CD8-positive, alpha-beta T cell (primary cell): ENCODE measurements at regions of chr7 and their contacts with region 1.

Region 1: DNA sequence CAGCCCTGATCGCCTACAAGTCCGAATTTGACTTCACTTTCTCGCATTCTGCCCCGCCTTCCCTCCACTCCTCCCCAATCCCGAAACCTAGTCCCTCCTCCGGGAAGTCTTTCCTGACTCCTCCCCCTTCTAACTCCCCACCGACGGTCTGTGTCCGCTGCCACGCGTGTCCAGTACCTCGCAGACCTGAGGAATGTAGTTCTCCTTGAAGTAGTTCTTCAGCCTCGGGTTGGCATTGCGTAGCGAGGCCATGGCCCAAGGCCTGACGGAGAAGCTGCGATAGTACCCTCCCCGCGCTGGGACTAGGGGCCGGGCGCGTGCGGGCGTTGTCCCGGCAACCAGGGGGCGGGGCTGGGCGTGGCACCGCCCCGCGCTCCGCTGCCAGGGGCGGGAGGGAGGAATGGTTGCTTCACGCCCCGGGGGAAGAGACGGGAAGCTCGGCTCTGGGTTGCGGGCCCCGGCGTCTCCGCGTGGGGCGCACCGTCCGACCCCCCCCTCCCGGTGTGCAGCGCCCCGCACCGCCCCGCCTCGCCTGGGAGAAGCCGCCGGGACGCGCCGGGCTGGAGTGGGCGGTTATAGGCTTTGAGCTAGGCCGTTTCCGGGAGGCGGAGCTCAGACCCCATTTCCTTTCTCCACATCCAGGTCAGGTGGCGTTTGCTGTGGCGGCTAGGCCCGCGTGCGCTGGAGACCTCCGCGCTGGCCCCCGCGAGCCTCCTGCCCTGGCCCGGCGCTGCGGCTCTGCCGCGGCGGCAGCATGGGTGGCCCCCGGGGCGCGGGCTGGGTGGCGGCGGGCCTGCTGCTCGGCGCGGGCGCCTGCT is at the starts of genes ARMC10 and FBXL13:
- DNase-seq: peak; percentile 79 to 95 (median 87)
- ATAC-seq: peak; percentile 78
- H3K4me3 ChIP-seq: peak within 1 kb of the TSS; percentile 81 to 99
- H3K4me3 Mint-ChIP-seq: peak within 1 kb of the TSS; percentile 98
- H3K27ac ChIP-seq: peak within 1 kb of the TSS; percentile 77 to 81
- H3K27ac Mint-ChIP-seq: peak within 1 kb of the TSS; percentile 96
- H3K4me1 ChIP-seq: peaks cover 26% of the 10 kb centered on the region
- H3K4me1 Mint-ChIP-seq: peaks cover 45% of the 10 kb centered on the region
- H3K27me3 ChIP-seq: no peaks in the 10 kb centered on the region
- H3K27me3 Mint-ChIP-seq: no peaks in the 10 kb centered on the region
- CTCF ChIP-seq: no peak
- total RNA-seq, gene ARMC10: 6.3 to 6.6 TPM
- total RNA-seq, gene FBXL13: 1.5 to 2.4 TPM

Region 2: GRCh38 chr7:102912742-102913141 is 162.0 kb before region 1 on chr7 and contains the start of gene LRRC17:
- CTCF ChIA-PET with region 1: no interaction called
- POLR2A ChIA-PET with region 1: no interaction called
- intact Hi-C with region 1: no loop called
- DNase-seq: no peak
- ATAC-seq: no peak
- H3K4me3 ChIP-seq: no peak within 1 kb of the TSS
- H3K4me3 Mint-ChIP-seq: no peak within 1 kb of the TSS
- H3K27ac ChIP-seq: no peak within 1 kb of the TSS
- H3K27ac Mint-ChIP-seq: no peak within 1 kb of the TSS
- H3K4me1 ChIP-seq: no peaks in the 10 kb centered on the region
- H3K4me1 Mint-ChIP-seq: no peaks in the 10 kb centered on the region
- H3K27me3 ChIP-seq: no peaks in the 10 kb centered on the region
- H3K27me3 Mint-ChIP-seq: no peaks in the 10 kb centered on the region
- CTCF ChIP-seq: no peak
- total RNA-seq, gene LRRC17: not detected

Region 3: GRCh38 chr7:103037476-103037822 is 37.3 kb before region 1 on chr7:
- CTCF ChIA-PET with region 1: no interaction called
- POLR2A ChIA-PET with region 1: no interaction called
- intact Hi-C with region 1: no loop called
- DNase-seq: no peak
- ATAC-seq: no peak
- H3K4me3 ChIP-seq: no peak overlapping the region
- H3K4me3 Mint-ChIP-seq: no peak overlapping the region
- H3K27ac ChIP-seq: no peak overlapping the region
- H3K27ac Mint-ChIP-seq: no peak overlapping the region
- H3K4me1 ChIP-seq: no peaks in the 10 kb centered on the region
- H3K4me1 Mint-ChIP-seq: no peaks in the 10 kb centered on the region
- H3K27me3 ChIP-seq: no peaks in the 10 kb centered on the region
- H3K27me3 Mint-ChIP-seq: no peaks in the 10 kb centered on the region
- CTCF ChIP-seq: no peak

Region 4: GRCh38 chr7:103148994-103149807 is 74.5 kb after region 1 on chr7 and contains the start of gene NAPEPLD:
- CTCF ChIA-PET with region 1: interaction called, 5 read pairs
- POLR2A ChIA-PET with region 1: interaction called, 13 read pairs
- intact Hi-C with region 1: loop called (anchors 1 to 2 kb)
- DNase-seq: peak; percentile 47 to 89 (median 68)
- ATAC-seq: peak; percentile 90
- H3K4me3 ChIP-seq: peak within 1 kb of the TSS; percentile 93 to 95
- H3K4me3 Mint-ChIP-seq: peak within 1 kb of the TSS; percentile 98
- H3K27ac ChIP-seq: peak within 1 kb of the TSS; percentile 68 to 84
- H3K27ac Mint-ChIP-seq: peak within 1 kb of the TSS; percentile 96
- H3K4me1 ChIP-seq: peaks cover 21% of the 10 kb centered on the region
- H3K4me1 Mint-ChIP-seq: peaks cover 46% of the 10 kb centered on the region
- H3K27me3 ChIP-seq: no peaks in the 10 kb centered on the region
- H3K27me3 Mint-ChIP-seq: no peaks in the 10 kb centered on the region
- CTCF ChIP-seq: no peak
- total RNA-seq, gene NAPEPLD: 0.81 to 2.8 TPM

Region 5: GRCh38 chr7:104207731-104208420 is 1133.1 kb after region 1 on chr7 and contains the start of gene ORC5:
- CTCF ChIA-PET with region 1: no interaction called
- POLR2A ChIA-PET with region 1: no interaction called
- intact Hi-C with region 1: loop called in 1 of 2 experiments (anchors 10 kb)
- DNase-seq: peak; percentile 41 to 90 (median 73)
- ATAC-seq: peak; percentile 95
- H3K4me3 ChIP-seq: peak within 1 kb of the TSS; percentile 85 to 87
- H3K4me3 Mint-ChIP-seq: peak within 1 kb of the TSS; percentile 92
- H3K27ac ChIP-seq: peak within 1 kb of the TSS; percentile 75 to 91
- H3K27ac Mint-ChIP-seq: peak within 1 kb of the TSS; percentile 95
- H3K4me1 ChIP-seq: peaks cover 17% of the 10 kb centered on the region
- H3K4me1 Mint-ChIP-seq: peaks cover 49% of the 10 kb centered on the region
- H3K27me3 ChIP-seq: no peaks in the 10 kb centered on the region
- H3K27me3 Mint-ChIP-seq: peaks cover 15% of the 10 kb centered on the region
- CTCF ChIP-seq: no peak
- total RNA-seq, gene ORC5: 9.7 to 11.3 TPM